GM12878 (cell line): ENCODE measurements at regions of chr13 and their contacts with region 1.

Region 1: GRCh38 chr13:48457578-48458242 is 44.8 kb upstream of the LPAR6 start:
- DNase-seq: no peak
- ATAC-seq: no peak
- H3K4me3 ChIP-seq: no peak overlapping the region
- H3K27ac ChIP-seq: no peak overlapping the region
- H3K4me1 ChIP-seq: no peaks in the 10 kb centered on the region
- H3K27me3 ChIP-seq: no peaks in the 10 kb centered on the region
- CTCF ChIP-seq: no peak
- EP300 ChIP-seq: no peak
- POLR2A ChIP-seq: no peak
- RAD21 ChIP-seq: no peak

Region 2: GRCh38 chr13:48477191-48477855 is 19.6 kb after region 1 on chr13:
- CTCF ChIA-PET with region 1: interaction called, 10 read pairs
- POLR2A ChIA-PET with region 1: no interaction called
- RAD21 ChIA-PET with region 1: no interaction called
- SMC1A ChIA-PET with region 1: interaction called, 5 read pairs
- in situ Hi-C with region 1: no loop called
- intact Hi-C with region 1: no loop called
- DNase-seq: no peak
- ATAC-seq: peak; percentile 86
- H3K4me3 ChIP-seq: no peak overlapping the region
- H3K27ac ChIP-seq: peak overlapping the region; percentile 33
- H3K4me1 ChIP-seq: peaks cover 22% of the 10 kb centered on the region; the same call in 1 of the 2 replicates
- H3K27me3 ChIP-seq: no peaks in the 10 kb centered on the region
- CTCF ChIP-seq: no peak
- EP300 ChIP-seq: no peak
- POLR2A ChIP-seq: no peak
- RAD21 ChIP-seq: no peak

Region 3: DNA sequence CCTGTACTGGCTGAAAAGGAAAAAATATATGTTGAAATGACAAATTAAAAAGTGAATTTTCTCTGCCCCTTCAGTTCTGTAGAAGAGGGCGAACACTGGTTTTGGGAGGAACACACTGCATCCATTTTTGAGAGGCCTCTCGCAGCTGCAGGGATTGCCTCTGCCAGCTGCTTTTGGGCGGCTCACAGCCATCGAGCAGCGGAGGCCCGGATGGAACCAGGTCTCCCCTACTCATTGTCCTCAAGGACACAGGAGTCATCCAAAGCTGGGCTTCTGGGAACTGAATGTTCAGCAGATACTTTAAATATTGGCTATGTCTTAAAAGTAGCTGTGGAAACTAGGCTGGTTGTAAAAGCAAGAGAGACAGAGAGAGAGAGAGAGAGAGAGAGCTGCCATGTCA is 58.0 kb after region 1 on chr13:
- CTCF ChIA-PET with region 1: no interaction called
- POLR2A ChIA-PET with region 1: no interaction called
- RAD21 ChIA-PET with region 1: no interaction called
- SMC1A ChIA-PET with region 1: no interaction called
- in situ Hi-C with region 1: no loop called
- intact Hi-C with region 1: no loop called
- DNase-seq: no peak
- ATAC-seq: no peak
- H3K4me3 ChIP-seq: no peak overlapping the region
- H3K27ac ChIP-seq: no peak overlapping the region
- H3K4me1 ChIP-seq: no peaks in the 10 kb centered on the region
- H3K27me3 ChIP-seq: no peaks in the 10 kb centered on the region
- CTCF ChIP-seq: no peak
- EP300 ChIP-seq: no peak
- POLR2A ChIP-seq: no peak
- RAD21 ChIP-seq: no peak